ENCODE measurements at regions of chr13 and their contacts with region 1.

Region 1: DNA sequence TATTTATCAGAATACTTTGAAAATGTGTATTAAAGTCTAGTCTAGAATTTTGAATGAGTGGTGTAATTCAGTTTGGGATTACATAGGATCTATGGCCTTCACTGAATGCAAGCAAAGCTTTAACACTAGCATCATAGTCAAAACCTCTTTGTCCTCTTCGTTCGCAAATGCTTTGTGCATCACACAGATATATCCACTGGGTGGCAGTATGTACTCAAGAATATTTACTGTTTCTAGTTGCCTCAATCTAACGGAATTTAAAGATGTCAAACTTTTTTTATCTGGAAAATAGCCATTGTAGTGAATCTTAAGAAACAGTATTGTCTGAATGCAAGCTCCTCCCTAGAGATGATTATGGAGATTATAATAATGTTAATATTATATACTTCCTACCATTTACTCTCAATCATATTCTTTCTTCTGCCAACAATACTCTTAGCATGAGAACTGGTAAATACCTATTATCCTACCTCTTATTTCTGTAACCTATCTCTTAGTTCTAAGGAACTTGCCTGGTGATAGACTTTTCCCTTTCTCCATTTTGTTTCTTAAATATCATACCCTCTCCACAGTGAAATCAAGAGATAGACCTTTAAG is 25.8 kb downstream of the LACC1 start:
- DNase-seq: peak; percentile 67
- H3K4me3 ChIP-seq: no peak overlapping the region
- H3K27ac ChIP-seq: peak overlapping the region; percentile 2 to 54
- H3K4me1 ChIP-seq: peaks cover 13% of the 10 kb centered on the region
- H3K27me3 ChIP-seq: no peaks in the 10 kb centered on the region
- CTCF ChIP-seq: peak; percentile 78 to 91 (median 80)
- POLR2A ChIP-seq: no peak

Region 2: DNA sequence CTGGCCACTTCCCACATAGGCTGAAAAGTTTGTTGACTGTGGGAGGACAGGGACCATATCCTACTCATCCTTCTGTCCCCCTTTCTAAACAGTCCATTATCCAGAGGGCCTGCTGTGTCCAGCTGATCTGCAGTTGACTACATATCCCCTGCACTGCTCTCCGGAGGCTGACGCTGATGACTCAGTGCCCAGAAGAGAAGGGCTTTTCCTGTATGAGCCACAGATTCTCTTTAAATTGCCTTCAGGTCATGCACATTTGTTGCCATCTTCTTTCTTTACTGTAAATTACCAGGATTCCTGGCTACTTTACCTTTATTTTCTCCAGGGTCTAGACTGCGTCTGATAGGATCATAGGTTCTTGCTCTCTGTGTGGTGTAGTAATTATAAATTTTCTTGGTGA is 99.3 kb after region 1 on chr13:
- intact Hi-C with region 1: no loop called
- DNase-seq: no peak
- H3K4me3 ChIP-seq: no peak overlapping the region
- H3K27ac ChIP-seq: no peak overlapping the region
- H3K4me1 ChIP-seq: peaks cover 8% of the 10 kb centered on the region
- H3K27me3 ChIP-seq: no peaks in the 10 kb centered on the region
- CTCF ChIP-seq: no peak
- POLR2A ChIP-seq: no peak

Region 3: GRCh38 chr13:44050450-44051063 is 145.0 kb after region 1 on chr13:
- intact Hi-C with region 1: loop called (anchors 10 kb)
- DNase-seq: no peak
- H3K4me3 ChIP-seq: no peak overlapping the region
- H3K27ac ChIP-seq: no peak overlapping the region
- H3K4me1 ChIP-seq: peaks cover 19% of the 10 kb centered on the region
- H3K27me3 ChIP-seq: no peaks in the 10 kb centered on the region
- CTCF ChIP-seq: peak; percentile 66 to 83 (median 74)
- POLR2A ChIP-seq: no peak

Region 4: GRCh38 chr13:44141725-44142539 is 236.4 kb after region 1 on chr13:
- intact Hi-C with region 1: no loop called
- DNase-seq: peak; percentile 97
- H3K4me3 ChIP-seq: peak overlapping the region; percentile 67 to 73
- H3K27ac ChIP-seq: peak overlapping the region; percentile 93 to 97
- H3K4me1 ChIP-seq: peaks cover 19% of the 10 kb centered on the region
- H3K27me3 ChIP-seq: no peaks in the 10 kb centered on the region
- CTCF ChIP-seq: peak in 1 of 3 experiments; percentile 29
- POLR2A ChIP-seq: peak; percentile 94

Measured in testis (tissue), 5 donors.